Aorta (tissue), 5 donors: ENCODE measurements at regions of chr14 and their contacts with region 1.

Region 1: DNA sequence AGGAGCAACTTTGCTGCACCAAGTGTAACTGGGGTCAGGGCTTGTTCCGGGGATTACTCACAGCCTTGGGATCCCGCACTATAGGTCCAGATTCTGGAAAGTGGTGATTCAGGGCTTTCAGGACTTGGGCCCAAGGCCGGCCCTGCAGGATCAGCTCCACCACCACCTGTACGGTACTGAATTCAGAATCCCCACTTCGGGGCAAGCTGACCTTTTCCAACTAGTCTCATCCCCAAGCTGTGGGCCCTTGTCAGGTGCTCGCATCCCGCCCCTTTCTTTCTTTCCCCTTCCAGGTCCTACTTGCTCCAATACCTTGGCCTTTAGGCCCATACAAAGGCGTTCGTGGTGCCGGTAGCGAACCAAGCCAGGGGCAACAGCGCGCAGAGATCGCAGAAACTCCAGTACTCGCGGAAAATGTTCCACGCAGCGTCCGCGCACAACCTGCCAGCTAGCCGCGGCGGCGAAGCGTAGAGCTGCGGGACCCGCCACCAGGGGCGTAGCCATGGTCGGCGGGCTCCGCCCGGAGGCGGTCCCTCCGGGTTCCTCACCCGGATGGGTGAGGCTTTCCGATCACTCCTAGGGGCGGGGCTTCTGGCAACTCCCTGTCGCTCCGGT is 487 bp downstream of the TINF2 start:
- DNase-seq: peak; percentile 96
- ATAC-seq: peak; percentile 97
- H3K4me3 ChIP-seq: peak overlapping the region; percentile 63 to 66
- H3K27ac ChIP-seq: peak overlapping the region; percentile 36 to 98
- H3K4me1 ChIP-seq: peaks cover 0 to 3% of the 10 kb centered on the region in 2 donors
- H3K27me3 ChIP-seq: no peaks in the 10 kb centered on the region

Region 2: GRCh38 chr14:24271134-24271833 is 29.3 kb after region 1 on chr14 and contains the start of gene RABGGTA:
- intact Hi-C with region 1: loop called in 1 of 2 experiments (anchors 1 kb)
- DNase-seq: peak; percentile 93 to 96
- ATAC-seq: peak; percentile 95
- H3K4me3 ChIP-seq: peak within 1 kb of the TSS; percentile 54 to 64
- H3K27ac ChIP-seq: peak within 1 kb of the TSS; percentile 58 to 79
- H3K4me1 ChIP-seq: no peaks in the 10 kb centered on the region
- H3K27me3 ChIP-seq: no peaks in the 10 kb centered on the region
- total RNA-seq, gene RABGGTA: 17.1 to 26.1 TPM

Region 3: GRCh38 chr14:24299255-24300195 is 57.6 kb after region 1 on chr14 and contains the starts of genes DHRS1 and NOP9:
- intact Hi-C with region 1: loop called (anchors 1 to 5 kb)
- DNase-seq: peak; percentile 93 to 97
- ATAC-seq: peak; percentile 94
- H3K4me3 ChIP-seq: peak within 1 kb of the TSS; percentile 58 to 90
- H3K27ac ChIP-seq: peak within 1 kb of the TSS in 1 of 2 donors; percentile 10
- H3K4me1 ChIP-seq: no peaks in the 10 kb centered on the region
- H3K27me3 ChIP-seq: no peaks in the 10 kb centered on the region
- total RNA-seq, gene DHRS1: 21.2 to 27.3 TPM
- total RNA-seq, gene NOP9: 17.8 to 19.9 TPM

Region 4: DNA sequence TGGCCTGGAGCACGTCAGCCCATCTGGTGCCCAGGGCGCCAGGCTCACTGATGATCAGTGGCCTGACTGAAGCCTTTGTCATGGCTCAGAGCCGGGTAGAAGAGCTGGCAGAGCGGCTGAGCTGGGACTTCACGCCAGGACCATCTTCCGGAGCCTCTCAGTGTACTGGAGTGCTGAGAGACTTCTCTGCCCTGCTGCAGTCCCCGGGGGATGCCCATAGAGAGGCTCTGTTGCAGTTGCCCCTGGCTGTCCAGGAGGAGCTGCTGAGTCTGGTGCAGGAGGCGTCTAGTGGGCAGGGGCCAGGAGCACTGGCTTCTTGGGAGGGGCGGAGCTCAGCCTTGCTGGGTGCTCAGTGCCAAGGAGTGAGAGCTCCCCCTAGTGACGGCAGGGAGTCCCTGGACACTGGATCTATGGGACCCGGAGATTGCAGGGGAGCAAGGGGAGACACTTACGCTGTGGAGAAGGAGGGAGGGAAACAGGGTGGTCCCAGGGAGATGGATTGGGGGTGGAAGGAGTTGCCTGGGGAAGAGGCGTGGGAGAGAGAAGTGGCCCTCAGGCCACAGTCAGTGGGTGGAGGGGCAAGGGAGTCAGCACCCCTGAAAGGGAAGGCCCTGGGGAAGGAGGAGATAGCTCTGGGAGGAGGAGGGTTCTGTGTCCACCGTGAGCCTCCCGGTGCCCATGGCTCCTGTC is 189.8 kb after region 1 on chr14:
- intact Hi-C with region 1: loop called in 1 of 2 experiments (anchors 5 kb)
- DNase-seq: peak; percentile 95 to 96
- ATAC-seq: peak; percentile 85
- H3K4me3 ChIP-seq: no peak overlapping the region
- H3K27ac ChIP-seq: no peak overlapping the region
- H3K4me1 ChIP-seq: no peaks in the 10 kb centered on the region
- H3K27me3 ChIP-seq: no peaks in the 10 kb centered on the region

Region 5: DNA sequence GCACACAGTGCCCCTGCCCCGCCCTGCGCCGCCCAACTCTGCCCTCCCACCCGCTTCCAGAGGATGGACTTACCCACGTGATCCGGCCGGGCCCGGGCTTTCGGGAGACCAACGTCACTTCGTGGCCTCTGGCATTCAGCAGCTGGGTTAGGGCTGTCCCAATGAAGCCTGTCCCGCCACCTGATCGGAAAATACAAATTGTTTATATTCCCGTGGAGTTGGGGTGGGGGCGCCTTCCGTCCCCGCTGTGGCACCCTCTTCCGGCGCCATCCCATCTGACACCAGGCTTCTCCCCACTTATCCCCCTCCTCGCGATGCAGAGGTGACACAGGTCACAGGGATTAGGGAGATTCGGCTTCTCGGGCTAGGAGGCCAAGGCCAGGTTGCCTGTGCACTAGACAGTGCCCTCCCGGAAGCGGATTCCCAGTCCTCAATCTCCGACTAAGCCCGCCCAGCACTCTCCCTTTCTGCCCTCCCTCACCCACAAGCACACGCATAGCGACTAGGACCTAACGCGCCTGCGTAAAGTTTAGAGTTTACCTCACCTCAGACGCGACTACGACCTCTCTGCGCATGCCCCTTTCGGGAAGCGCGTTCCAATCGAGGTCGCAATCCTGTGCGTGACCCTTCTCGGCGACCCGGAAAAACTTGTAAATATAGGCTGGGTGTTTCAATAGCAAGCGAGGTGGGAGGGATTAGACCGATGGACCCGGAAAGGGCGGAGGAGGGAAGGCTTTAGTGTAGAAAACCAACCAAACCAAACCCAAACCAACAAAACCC is 200.5 kb after region 1 on chr14 and contains the start of gene SDR39U1:
- intact Hi-C with region 1: loop called in 1 of 2 experiments (anchors 1 kb)
- DNase-seq: peak; percentile 98 to 99
- ATAC-seq: peak; percentile 97
- H3K4me3 ChIP-seq: peak within 1 kb of the TSS; percentile 53 to 95
- H3K27ac ChIP-seq: peak within 1 kb of the TSS; percentile 91 to 95
- H3K4me1 ChIP-seq: no peaks in the 10 kb centered on the region
- H3K27me3 ChIP-seq: no peaks in the 10 kb centered on the region
- total RNA-seq, gene SDR39U1: 46.0 to 62.3 TPM